ENCODE measurements at regions of chr16 and their contacts with region 1.

Region 1: DNA sequence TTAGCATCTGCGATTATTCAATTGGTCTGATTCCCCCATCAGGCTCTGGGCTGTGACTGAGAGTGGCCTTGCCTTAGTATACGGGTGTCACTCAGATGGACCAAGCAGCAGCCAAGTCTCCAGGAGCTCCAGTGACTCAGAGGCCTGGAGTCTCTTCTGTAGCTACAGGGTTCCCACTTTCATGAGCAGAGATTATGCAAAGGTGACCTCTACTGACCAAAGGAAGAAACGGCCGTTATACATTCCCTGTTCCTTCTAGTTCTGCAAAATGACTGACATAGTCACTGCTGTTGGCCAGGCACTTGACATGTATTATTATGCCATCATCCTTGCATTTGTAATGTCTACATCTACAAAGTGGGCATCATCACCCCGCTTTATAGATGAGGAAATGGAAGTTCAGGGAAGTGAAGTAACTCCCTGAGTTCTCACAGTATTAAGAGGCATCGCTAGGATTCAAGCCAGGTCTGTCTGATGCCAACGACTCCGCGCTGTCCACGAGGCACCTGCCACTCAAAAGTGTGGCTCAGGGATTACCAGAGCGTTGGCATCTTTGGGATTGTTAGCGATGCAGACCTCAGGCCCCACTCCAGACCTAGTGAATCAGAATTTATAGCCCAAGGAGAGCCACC is 23.3 kb downstream of the SLC38A7 start:
- DNase-seq: peak; percentile 23
- ATAC-seq: peak; percentile 95
- H3K4me3 Mint-ChIP-seq: no peak overlapping the region
- H3K27ac Mint-ChIP-seq: no peak overlapping the region
- H3K4me1 Mint-ChIP-seq: no peaks in the 10 kb centered on the region
- H3K27me3 Mint-ChIP-seq: no peaks in the 10 kb centered on the region; the same call in 1 of the 2 replicates
- CTCF ChIP-seq: 0 out of 2 replicates have a peak, but pooled peaks have one; percentile 13

Region 2: DNA sequence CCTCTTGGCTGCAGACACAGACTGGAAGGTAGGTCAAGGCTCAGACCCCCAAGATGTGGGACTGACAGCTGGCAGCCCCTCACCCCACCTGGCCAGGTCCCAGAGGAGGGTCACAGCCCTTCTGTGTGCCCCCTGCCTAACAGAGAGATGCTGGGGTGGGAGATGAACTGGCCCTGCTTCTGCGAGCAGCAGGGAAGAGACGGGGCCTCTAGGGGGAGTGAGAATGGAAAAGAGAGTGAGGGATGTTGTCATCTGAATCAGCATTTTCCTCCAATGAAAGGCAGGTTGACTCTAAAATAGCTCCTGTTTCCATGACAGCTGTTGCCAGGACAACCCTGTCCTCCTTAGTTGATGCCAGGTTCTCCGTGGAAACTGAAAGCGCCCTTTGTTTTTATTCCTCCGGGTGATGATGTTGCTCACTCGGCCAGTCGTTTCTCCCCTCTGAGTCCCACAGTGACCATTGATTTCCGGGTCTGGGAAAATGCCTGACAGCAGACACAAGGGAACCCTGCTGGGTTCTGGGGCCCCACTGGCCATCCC is 166.3 kb before region 1 on chr16:
- CTCF ChIA-PET with region 1: interaction called, 13 read pairs
- POLR2A ChIA-PET with region 1: no interaction called
- DNase-seq: peak; percentile 83
- ATAC-seq: peak; percentile 60
- H3K4me3 Mint-ChIP-seq: 0 out of 2 replicates have a peak overlapping the region, but pooled peaks have one; percentile 22
- H3K27ac Mint-ChIP-seq: 0 out of 2 replicates have a peak overlapping the region, but pooled peaks have one; percentile 72
- H3K4me1 Mint-ChIP-seq: peaks cover 16% of the 10 kb centered on the region
- H3K27me3 Mint-ChIP-seq: peaks cover 37% of the 10 kb centered on the region
- CTCF ChIP-seq: no peak; the same call in 1 of the 2 replicates

Region 3: DNA sequence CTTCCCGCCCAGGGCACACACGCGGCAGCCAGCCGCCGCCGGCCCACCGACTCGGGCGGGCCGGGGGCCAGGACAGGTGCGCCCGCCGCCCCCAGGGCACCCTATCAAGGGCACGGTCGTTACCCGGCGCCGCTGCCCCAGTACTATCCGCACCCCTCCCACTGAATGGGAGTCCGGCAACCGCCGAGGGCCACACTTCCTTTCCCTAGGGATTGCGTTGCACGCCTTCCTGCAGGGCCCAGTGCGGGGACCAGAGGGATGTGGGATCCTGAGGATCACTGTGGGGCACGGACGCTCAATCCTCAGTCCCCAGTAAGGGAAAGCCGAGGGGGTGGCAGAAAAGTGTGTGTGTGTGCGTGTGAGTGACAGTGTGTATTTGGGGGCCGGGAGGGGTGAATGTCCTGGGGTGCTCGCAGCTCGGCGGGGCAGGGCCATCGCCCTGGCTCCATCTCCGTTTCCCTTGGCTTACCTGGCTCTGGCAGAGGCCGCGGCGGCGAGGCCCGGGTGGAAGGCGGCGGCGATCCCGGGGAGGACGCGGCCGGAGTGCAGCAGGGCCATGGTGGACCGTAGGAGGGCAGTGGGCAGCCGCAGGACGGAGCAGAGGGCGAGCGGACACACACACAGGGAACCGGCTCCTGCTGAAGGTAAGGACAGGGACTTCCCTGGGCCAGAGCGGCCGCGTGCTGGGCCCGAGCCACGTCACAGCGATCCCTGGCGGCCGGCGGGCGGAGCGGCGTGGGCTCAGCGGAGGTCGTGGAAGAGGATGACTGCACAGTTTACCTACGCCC is 72.5 kb after region 1 on chr16 and contains the start of gene GOT2:
- CTCF ChIA-PET with region 1: no interaction called
- POLR2A ChIA-PET with region 1: no interaction called
- DNase-seq: peak; percentile 83
- ATAC-seq: peak; percentile 95
- H3K4me3 Mint-ChIP-seq: peak within 1 kb of the TSS; percentile 100
- H3K27ac Mint-ChIP-seq: peak within 1 kb of the TSS; percentile 97
- H3K4me1 Mint-ChIP-seq: peaks cover 29% of the 10 kb centered on the region
- H3K27me3 Mint-ChIP-seq: no peaks in the 10 kb centered on the region
- CTCF ChIP-seq: peak; percentile 32; the same call in 1 of the 2 replicates
- total RNA-seq, gene GOT2: 180 to 192 TPM (median 185 TPM) in 3 replicates

Measured in WTC11 (cell line).